ENCODE measurements at regions of chr5 and their contacts with region 1.

Region 1: DNA sequence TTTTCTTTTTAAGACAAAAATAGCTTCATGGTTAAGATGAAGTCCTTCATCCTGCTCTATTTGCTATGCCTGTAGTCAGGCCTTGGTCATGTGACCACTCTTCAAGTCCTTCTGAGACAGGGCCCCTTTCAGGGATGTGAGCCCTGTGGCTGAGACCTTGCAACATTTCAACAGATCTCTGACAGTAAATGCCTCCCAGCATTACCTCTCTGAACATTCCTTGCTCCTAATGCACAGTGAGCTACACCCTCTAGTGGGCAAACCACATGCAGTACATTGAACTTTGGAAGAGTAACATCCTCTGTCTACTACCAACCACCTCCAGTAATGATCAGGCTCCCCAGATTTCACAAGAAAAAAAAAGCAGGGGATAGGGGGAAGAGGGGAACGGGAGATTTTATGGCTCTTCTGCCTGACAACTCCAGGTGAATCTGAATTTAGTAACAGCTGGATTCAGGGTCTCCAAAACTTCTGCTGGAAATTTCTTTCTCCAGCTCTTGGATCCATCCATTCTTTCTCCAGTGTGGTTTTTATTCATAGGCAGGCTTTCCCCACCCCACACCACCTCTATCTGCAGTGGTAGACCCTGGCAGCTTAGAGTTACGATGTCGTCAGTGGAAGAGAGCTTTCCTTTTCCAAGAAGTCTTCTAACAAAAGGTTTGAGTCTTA is 8.9 kb upstream of the FBXO38 start:
- DNase-seq: peak; percentile 66
- H3K4me3 ChIP-seq: no peak overlapping the region
- H3K27ac ChIP-seq: no peak overlapping the region
- H3K4me1 ChIP-seq: peaks cover 16% of the 10 kb centered on the region
- H3K27me3 ChIP-seq: no peaks in the 10 kb centered on the region
- CTCF ChIP-seq: peak; percentile 77 to 78
- POLR2A ChIP-seq: no peak

Region 2: DNA sequence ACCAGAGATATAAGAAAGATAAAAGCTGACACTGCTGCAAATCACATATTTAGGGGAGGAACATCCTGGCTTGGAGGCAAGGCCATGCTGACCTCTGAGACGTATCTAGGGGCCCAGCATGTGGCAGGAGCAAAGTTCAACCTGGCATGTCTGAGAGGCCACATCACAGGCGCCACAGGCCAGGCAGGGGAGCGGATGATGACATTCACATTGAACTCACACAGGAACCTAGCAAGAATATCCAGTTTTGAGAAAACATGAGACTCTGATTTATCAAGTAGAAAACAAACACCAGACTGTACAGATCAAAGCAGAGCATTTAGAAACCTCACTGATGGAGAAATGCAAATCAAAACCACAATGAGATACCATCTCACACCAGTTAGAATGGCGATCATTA is 1204.2 kb before region 1 on chr5:
- CTCF ChIA-PET with region 1: no interaction called
- POLR2A ChIA-PET with region 1: no interaction called
- dilution Hi-C with region 1: no loop called
- intact Hi-C with region 1: no loop called
- DNase-seq: no peak
- H3K4me3 ChIP-seq: no peak overlapping the region
- H3K27ac ChIP-seq: no peak overlapping the region
- H3K4me1 ChIP-seq: no peaks in the 10 kb centered on the region
- H3K27me3 ChIP-seq: no peaks in the 10 kb centered on the region
- CTCF ChIP-seq: no peak
- POLR2A ChIP-seq: no peak

Region 3: DNA sequence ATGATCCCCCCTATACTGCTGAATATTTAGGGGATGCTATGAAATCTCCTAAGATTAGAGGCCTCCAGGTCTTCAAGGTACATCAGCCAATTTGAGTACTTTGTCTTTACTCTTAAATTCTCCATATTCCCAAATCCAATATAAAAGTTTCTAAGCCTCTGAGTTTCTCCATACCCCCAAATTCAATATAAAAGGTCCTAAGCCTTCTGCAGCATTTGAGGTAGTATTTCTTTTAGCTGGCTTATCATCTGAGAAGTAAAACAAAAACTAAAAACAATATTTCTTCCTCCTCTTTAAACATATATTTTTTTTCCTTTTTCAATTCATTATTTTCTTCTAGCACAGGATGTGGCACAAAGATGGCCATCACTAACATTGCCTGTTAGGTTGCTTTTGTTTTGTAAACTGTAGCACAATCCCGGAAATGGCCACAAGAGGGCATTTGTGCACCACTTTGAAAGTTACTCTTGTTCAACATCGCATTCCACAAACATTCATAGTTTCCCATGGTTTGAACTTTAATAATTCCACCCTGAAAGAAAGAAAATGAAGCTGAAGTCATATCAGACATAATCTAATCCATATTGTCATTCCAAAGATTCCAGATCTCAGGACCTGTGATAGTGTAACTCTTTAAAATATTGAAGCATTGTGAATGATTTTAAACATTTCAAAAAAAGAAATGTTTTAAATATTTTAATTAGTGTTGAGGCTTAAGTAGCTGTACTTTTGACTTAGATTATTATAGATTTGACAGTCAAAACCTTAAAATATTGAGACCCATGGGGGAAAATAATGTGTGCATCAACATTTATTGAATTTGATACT is 517.3 kb before region 1 on chr5:
- CTCF ChIA-PET with region 1: interaction called, 4 read pairs
- POLR2A ChIA-PET with region 1: no interaction called
- dilution Hi-C with region 1: no loop called
- intact Hi-C with region 1: loop called (anchors 10 kb)
- DNase-seq: peak; percentile 76
- H3K4me3 ChIP-seq: no peak overlapping the region
- H3K27ac ChIP-seq: no peak overlapping the region
- H3K4me1 ChIP-seq: no peaks in the 10 kb centered on the region
- H3K27me3 ChIP-seq: no peaks in the 10 kb centered on the region
- CTCF ChIP-seq: peak; percentile 63 to 67
- POLR2A ChIP-seq: no peak

Region 4: DNA sequence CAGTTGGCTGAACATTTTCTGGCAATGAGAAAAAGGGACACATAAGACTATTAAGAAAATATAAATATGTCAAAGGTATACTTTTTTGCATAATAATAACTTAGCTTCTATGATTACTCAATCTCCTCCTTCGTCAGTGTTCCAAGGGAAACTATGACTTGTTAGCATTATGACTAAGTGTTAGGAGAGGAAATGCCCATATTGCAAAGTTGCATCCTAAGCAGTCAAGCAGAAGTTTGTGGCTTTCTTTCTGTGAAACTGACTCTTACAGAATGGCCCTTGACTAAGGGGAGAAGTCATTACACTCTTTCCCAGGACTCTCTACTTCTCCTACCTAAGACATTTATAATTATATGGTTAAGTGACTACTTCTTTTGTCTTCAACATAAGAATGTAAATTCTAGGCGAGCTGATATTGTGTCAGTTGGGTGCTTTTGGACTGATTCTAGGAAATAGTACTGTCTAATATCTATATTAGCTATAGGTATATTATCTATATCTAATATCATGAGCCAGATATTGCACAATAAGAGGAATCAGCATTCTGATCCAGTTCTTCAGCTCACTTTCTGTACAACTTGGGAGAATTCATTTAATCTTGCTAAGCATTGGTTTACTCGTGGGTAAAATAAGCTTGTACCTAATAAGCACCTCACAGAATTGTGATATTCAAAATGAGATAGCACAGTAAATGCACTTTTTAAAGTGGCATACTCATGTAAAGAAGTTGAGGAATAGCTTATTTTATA is 188.4 kb before region 1 on chr5:
- CTCF ChIA-PET with region 1: interaction called, 18 read pairs
- POLR2A ChIA-PET with region 1: no interaction called
- dilution Hi-C with region 1: no loop called
- intact Hi-C with region 1: no loop called
- DNase-seq: peak; percentile 84
- H3K4me3 ChIP-seq: no peak overlapping the region
- H3K27ac ChIP-seq: peak overlapping the region; percentile 18
- H3K4me1 ChIP-seq: peaks cover 22% of the 10 kb centered on the region
- H3K27me3 ChIP-seq: no peaks in the 10 kb centered on the region
- CTCF ChIP-seq: no peak
- POLR2A ChIP-seq: no peak

Region 5: DNA sequence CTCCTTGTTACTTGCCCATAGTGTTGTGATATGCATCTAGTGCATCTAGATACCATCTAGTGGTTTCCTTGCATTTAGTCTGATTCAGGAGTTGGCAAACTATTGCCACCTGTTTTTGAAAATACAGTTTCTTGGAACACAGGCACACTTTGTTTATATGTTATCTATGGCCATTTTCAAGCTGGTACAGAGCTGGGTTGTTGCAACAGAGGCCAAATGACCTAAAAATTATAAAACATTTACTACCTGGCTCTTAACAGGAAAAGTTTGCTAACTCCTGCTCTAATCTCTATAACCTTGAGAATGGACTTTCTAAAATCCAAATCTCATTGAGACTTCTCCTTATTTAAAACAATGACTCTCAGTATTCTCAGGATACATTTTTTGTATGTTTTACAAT is 10.5 kb before region 1 on chr5:
- CTCF ChIA-PET with region 1: interaction called, 11 read pairs
- POLR2A ChIA-PET with region 1: no interaction called
- dilution Hi-C with region 1: no loop called
- intact Hi-C with region 1: no loop called
- DNase-seq: no peak
- H3K4me3 ChIP-seq: no peak overlapping the region
- H3K27ac ChIP-seq: no peak overlapping the region
- H3K4me1 ChIP-seq: no peaks in the 10 kb centered on the region
- H3K27me3 ChIP-seq: no peaks in the 10 kb centered on the region
- CTCF ChIP-seq: no peak
- POLR2A ChIP-seq: no peak

Region 6: DNA sequence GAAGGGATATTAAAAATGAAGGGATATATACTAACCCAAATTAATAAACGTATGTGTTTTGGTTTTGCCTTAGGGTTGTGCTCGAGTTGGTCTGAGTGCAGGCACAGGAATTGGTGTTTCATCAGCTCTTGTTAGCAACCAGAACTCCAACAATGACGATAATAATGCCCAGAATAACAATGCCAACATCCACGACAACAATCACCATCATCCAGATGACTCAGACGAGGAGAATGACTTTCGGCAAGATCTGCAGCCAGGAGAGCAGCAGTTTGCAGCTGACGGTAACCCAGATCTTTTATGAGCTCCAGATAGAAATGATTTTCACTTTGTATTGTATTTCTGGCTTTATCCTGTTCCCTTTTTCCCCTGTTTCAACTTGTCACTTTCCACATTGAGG is 42.1 kb after region 1 on chr5:
- CTCF ChIA-PET with region 1: interaction called, 14 read pairs
- POLR2A ChIA-PET with region 1: no interaction called
- dilution Hi-C with region 1: no loop called
- intact Hi-C with region 1: loop called (anchors 1 kb)
- DNase-seq: peak; percentile 97
- H3K4me3 ChIP-seq: no peak overlapping the region
- H3K27ac ChIP-seq: peak overlapping the region; percentile 92
- H3K4me1 ChIP-seq: peaks cover 14% of the 10 kb centered on the region
- H3K27me3 ChIP-seq: no peaks in the 10 kb centered on the region
- CTCF ChIP-seq: no peak
- POLR2A ChIP-seq: no peak